ENCODE measurements at regions of chr12 and their contacts with region 1.

Region 1: GRCh38 chr12:57111031-57111734 is at the start of gene STAT6:
- DNase-seq: peak; percentile 94
- ATAC-seq: peak; percentile 75
- H3K4me3 Mint-ChIP-seq: peak within 1 kb of the TSS; percentile 91
- H3K27ac Mint-ChIP-seq: peak within 1 kb of the TSS; percentile 95
- H3K4me1 Mint-ChIP-seq: peaks cover 53% of the 10 kb centered on the region
- H3K27me3 Mint-ChIP-seq: no peaks in the 10 kb centered on the region
- total RNA-seq, gene STAT6: 189 TPM

Region 2: DNA sequence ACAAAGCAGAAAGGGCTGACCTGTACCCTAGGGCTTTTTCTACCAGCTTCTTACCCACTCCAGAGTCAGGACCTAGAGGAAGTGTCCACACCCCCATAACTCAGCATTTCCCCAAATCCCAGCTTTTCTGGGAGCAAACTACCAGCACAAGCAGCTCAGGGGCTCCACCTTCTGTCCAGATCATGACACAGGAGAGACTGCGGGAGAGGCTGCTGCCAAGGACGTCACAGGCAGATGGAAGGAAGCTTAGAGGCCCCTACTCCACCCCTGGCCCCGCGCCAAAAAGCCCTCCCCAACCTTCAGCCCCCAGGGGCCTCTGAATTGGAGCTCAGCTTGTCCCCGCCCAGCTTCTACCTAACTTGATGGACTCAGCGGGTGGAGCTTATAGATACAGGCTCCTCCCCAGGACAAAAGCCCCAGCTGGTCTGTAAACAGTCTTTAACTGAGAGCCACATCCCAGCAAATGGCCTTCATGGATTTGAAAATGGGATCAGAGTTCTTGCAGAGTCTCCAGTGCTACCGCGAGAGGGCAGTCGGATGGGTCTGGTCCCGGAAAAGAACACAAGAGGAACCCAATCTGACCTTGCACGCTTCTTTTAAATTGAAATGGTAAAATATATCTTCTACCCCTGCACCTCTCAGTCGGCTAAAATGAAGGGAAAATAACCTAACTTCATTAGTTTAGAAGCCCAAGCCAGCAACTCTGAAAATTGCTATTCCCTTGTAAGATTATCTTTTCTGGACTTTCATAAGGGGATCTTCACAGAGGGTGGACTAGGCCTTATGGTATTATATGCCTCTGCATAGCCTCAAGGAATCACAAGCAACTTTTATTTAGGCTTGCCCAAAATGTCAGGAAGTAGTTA is 474.3 kb before region 1 on chr12:
- CTCF ChIA-PET with region 1: interaction called, 11 read pairs
- POLR2A ChIA-PET with region 1: no interaction called
- DNase-seq: peak; percentile 95
- ATAC-seq: peak; percentile 60
- H3K4me3 Mint-ChIP-seq: peak overlapping the region; percentile 88
- H3K27ac Mint-ChIP-seq: peak overlapping the region; percentile 93
- H3K4me1 Mint-ChIP-seq: peaks cover 63% of the 10 kb centered on the region
- H3K27me3 Mint-ChIP-seq: no peaks in the 10 kb centered on the region

Region 3: DNA sequence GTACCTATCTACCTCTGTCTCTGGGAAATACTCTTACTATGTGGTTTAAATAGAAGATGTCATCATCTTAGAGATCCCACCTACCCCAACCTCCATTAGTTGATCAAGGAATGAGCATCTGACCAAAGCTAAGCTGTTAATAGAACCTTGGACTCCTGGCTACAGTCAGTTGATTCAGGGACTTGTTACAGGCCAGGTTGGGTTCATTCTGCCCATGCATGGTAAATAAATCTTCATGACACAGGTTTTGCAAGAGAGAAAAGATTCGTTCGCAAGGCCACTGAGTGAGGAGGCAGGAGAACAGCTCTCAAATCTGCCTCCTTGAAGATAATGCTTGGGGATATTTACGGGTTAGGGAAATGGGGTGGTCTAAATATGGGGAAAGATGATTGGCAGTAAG is 196.5 kb before region 1 on chr12:
- CTCF ChIA-PET with region 1: no interaction called
- POLR2A ChIA-PET with region 1: no interaction called
- DNase-seq: no peak
- ATAC-seq: no peak
- H3K4me3 Mint-ChIP-seq: no peak overlapping the region
- H3K27ac Mint-ChIP-seq: no peak overlapping the region
- H3K4me1 Mint-ChIP-seq: no peaks in the 10 kb centered on the region
- H3K27me3 Mint-ChIP-seq: peaks cover 2% of the 10 kb centered on the region

Region 4: GRCh38 chr12:57005980-57006808 is 105.0 kb before region 1 on chr12 and contains the start of gene ZBTB39:
- CTCF ChIA-PET with region 1: interaction called, 82 read pairs
- POLR2A ChIA-PET with region 1: interaction called, 22 read pairs
- DNase-seq: peak; percentile 68
- ATAC-seq: peak; percentile 79
- H3K4me3 Mint-ChIP-seq: peak within 1 kb of the TSS; percentile 95
- H3K27ac Mint-ChIP-seq: peak within 1 kb of the TSS; percentile 83
- H3K4me1 Mint-ChIP-seq: peaks cover 60% of the 10 kb centered on the region
- H3K27me3 Mint-ChIP-seq: no peaks in the 10 kb centered on the region
- total RNA-seq, gene ZBTB39: 7.7 to 8.2 TPM

Region 5: DNA sequence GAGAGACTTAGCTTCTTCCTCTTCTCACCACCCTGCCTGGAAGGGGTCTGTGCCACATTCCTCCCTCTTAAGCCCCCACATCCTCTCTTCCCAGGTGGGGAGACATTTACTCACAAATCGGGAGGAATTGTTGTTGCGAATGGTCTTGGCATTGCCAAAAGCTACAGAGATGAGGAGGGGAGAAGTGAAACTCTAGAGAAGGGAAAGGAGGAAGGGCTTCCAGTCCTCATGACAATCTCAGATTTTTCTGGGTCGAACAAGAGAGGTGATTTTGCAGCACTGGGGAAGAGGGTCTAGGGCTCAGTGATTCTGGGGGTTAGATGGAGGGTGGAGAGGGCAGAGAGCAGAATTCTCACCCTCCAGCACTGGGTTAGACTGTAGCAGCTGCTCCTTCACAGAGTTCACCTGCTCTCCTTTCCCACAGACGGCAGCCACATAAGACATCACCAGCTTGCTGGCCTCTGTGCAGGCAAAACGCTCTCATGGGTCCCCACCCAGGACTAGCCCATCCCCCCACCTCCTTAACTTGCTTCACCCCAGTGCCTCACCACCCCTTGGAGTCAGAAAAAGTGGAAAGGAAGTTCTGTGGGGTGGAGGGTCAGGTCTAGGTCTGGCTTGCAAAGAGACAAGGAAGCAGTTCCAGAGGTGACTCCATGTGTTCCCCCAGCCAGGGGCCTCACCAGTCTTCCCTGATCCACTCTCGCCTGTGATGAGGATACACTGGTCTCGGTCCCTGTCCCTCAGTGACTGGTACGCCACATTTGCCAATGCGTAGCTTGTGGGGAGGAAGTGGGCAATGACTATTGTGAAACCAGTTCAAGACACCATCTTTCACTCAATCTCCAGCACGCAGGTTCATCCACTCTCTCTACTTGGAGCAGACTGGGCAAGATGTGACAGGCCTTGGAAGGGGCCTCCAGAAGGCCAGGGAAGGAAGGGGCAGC is 64.0 kb before region 1 on chr12:
- CTCF ChIA-PET with region 1: interaction called, 24 read pairs
- POLR2A ChIA-PET with region 1: interaction called, 9 read pairs
- DNase-seq: peak; percentile 84
- ATAC-seq: peak; percentile 83
- H3K4me3 Mint-ChIP-seq: peak overlapping the region; percentile 49
- H3K27ac Mint-ChIP-seq: peak overlapping the region; percentile 86
- H3K4me1 Mint-ChIP-seq: peaks cover 46% of the 10 kb centered on the region
- H3K27me3 Mint-ChIP-seq: no peaks in the 10 kb centered on the region

Region 6: DNA sequence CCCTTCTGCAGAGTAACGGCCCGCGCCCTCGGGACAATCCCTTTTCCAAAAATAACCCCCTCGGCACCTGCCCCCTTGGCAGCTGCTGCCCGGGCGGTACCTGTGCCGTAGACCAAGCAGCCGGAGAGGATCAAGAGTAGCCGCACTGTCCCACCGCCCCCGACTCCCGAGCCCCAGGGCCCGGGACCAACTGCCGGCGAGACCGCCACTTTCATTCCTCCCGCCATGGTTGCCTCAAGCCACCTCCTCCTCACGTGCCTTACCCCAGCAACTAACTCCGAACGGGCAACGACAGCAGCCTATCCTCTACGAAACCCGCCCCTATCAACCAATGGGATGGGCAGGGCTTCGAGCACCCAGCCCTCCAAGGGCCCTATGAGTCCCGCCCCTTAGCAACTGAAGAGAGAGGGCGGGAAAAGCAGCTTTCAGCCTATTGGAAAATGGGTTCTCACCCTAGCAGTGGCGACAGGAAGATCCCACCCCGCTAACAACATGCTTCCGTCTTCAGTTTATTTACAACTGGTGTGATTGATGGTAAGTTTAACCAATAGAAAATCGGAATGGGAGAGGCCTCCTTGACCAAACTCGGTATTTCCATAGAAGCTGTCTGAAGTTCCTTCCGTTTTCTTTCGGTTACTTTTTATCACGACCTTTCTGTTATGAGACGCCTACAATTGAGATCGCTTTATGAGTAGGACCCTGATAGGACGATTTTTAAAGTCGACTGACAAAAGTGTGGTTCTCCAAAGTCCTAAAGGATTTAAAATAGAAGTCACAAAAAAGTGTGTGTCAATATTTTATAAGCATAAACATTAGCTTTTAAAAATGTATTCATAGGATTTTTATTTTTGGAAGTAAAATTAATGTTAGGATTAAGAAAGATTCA is 32.4 kb before region 1 on chr12 and contains the start of gene NEMP1:
- CTCF ChIA-PET with region 1: interaction called, 233 read pairs
- POLR2A ChIA-PET with region 1: interaction called, 95 read pairs
- DNase-seq: peak; percentile 99
- ATAC-seq: peak; percentile 97
- H3K4me3 Mint-ChIP-seq: peak within 1 kb of the TSS; percentile 99
- H3K27ac Mint-ChIP-seq: peak within 1 kb of the TSS; percentile 98
- H3K4me1 Mint-ChIP-seq: peaks cover 29% of the 10 kb centered on the region
- H3K27me3 Mint-ChIP-seq: no peaks in the 10 kb centered on the region
- total RNA-seq, gene NEMP1: 56.4 to 56.9 TPM

Region 7: DNA sequence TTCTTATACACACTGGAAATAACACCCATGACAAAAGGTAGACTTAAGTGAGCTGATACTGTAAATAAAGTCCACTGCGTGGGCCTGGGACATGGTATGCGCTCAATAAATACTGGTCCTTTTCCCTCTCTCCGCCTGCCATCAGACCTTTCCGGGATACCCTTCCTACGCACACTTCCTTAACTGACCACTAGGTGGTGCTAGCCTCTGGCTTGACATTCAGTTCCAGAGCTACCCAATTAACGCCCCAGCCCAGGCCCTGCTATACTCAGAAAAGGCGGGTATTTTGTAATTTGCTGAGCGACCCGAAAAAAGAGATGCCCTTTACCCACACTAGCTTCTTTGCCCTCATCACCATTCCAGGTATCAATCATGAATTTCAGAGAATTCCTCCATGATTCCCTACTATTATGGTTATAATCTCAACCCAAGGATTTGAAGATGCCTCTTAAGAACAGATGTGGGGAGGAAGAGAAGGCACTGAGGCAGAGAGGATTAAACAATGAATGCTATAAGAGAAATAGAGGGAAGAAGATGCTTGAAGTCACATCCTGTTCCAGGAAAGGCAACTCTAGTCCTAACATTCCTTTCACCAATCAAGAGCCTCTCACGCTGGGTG is 13.2 kb after region 1 on chr12:
- CTCF ChIA-PET with region 1: interaction called, 83 read pairs
- POLR2A ChIA-PET with region 1: interaction called, 10 read pairs
- DNase-seq: peak; percentile 85
- ATAC-seq: peak; percentile 65
- H3K4me3 Mint-ChIP-seq: no peak overlapping the region
- H3K27ac Mint-ChIP-seq: no peak overlapping the region
- H3K4me1 Mint-ChIP-seq: peaks cover 5% of the 10 kb centered on the region
- H3K27me3 Mint-ChIP-seq: peaks cover 29% of the 10 kb centered on the region

Region 8: GRCh38 chr12:57238854-57239554 is 127.8 kb after region 1 on chr12:
- CTCF ChIA-PET with region 1: interaction called, 11 read pairs
- POLR2A ChIA-PET with region 1: interaction called, 5 read pairs
- DNase-seq: peak; percentile 90
- ATAC-seq: peak; percentile 64
- H3K4me3 Mint-ChIP-seq: peak overlapping the region; percentile 83
- H3K27ac Mint-ChIP-seq: peak overlapping the region; percentile 40
- H3K4me1 Mint-ChIP-seq: peaks cover 91% of the 10 kb centered on the region
- H3K27me3 Mint-ChIP-seq: peaks cover 43% of the 10 kb centered on the region